Caco-2 (cell line): ENCODE measurements at regions of chr12 and their contacts with region 1.

Region 1: DNA sequence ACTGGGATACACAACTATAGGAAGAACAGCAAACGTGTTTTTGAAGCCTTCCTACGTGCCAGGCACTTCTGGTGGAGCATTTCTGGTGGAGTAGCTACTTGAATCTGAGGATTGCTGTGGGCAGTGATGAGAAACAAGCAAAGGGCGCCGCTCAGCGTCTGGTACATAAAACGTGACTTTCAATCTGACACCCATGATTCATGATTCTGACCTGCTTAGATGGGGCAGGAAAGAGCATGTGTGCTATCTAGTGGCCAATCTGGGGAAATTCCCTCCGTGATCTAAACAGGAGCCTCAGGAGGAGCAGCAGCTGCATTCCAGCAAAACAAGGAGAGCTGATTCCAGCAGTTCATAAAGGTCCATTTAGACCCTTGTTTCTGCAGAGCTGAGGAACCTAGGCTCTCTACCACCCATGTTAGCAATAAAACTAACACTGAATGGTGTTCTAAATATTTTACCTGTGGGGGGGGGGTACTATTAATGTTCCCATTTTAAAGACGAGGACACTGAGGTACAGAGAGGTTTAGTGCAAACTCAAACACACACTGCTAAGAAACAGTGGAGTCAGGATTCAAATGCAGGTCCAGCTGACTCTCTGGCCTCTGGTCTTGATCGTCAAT is 37.8 kb downstream of the PAH start:
- DNase-seq: peak; percentile 51 to 57
- H3K4me3 ChIP-seq: no peak overlapping the region
- H3K4me3 Mint-ChIP-seq: no peak overlapping the region
- H3K27ac Mint-ChIP-seq: no peak overlapping the region
- H3K4me1 ChIP-seq: no peaks in the 10 kb centered on the region
- H3K4me1 Mint-ChIP-seq: no peaks in the 10 kb centered on the region
- H3K27me3 ChIP-seq: no peaks in the 10 kb centered on the region
- H3K27me3 Mint-ChIP-seq: peaks cover 3% of the 10 kb centered on the region
- CTCF ChIP-seq: peak; percentile 40 to 64

Region 2: DNA sequence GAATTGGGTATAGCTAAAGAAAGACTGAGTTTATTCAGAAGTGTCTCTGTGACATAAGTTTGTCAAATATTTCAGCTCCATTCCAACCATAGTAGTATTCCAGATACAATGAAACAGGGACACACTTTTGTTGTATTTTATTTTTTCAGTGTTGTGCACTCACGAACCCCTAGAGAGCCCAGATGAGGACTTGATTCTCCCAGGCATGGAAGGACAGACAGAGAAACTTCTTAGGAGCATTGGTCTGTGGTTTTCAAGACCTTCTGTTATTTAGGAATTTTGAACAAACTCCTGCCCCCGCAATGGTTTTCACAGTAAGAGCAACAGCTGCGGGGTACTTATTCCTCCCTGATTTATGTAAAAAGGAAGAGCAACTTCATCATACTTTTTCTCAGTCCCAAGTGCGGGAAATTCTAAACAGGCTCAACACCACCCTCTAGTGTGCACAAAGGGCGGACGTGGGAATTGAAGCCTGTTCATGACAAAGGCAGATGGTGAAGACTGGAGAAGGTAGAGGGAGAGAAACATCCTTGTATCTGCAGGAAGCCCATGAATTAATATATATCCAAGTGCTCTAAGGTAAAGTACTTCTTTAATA is 109.8 kb before region 1 on chr12:
- CTCF ChIA-PET with region 1: interaction called, 5 read pairs
- POLR2A ChIA-PET with region 1: no interaction called
- intact Hi-C with region 1: loop called (anchors 1 kb)
- DNase-seq: peak; percentile 49 to 64
- H3K4me3 ChIP-seq: no peak overlapping the region
- H3K4me3 Mint-ChIP-seq: no peak overlapping the region
- H3K27ac Mint-ChIP-seq: no peak overlapping the region
- H3K4me1 ChIP-seq: no peaks in the 10 kb centered on the region
- H3K4me1 Mint-ChIP-seq: no peaks in the 10 kb centered on the region
- H3K27me3 ChIP-seq: no peaks in the 10 kb centered on the region
- H3K27me3 Mint-ChIP-seq: peaks cover 7% of the 10 kb centered on the region
- CTCF ChIP-seq: peak; percentile 73 to 77

Region 3: GRCh38 chr12:102816816-102817434 is 62.3 kb before region 1 on chr12:
- CTCF ChIA-PET with region 1: interaction called, 4 read pairs
- POLR2A ChIA-PET with region 1: no interaction called
- intact Hi-C with region 1: loop called (anchors 2 kb)
- DNase-seq: peak in 1 of 2 experiments; percentile 24
- H3K4me3 ChIP-seq: no peak overlapping the region
- H3K4me3 Mint-ChIP-seq: no peak overlapping the region
- H3K27ac Mint-ChIP-seq: no peak overlapping the region
- H3K4me1 ChIP-seq: no peaks in the 10 kb centered on the region
- H3K4me1 Mint-ChIP-seq: no peaks in the 10 kb centered on the region
- H3K27me3 ChIP-seq: no peaks in the 10 kb centered on the region
- H3K27me3 Mint-ChIP-seq: peaks cover 19% of the 10 kb centered on the region
- CTCF ChIP-seq: peak; percentile 70 to 71

Region 4: GRCh38 chr12:102833687-102834445 is 45.4 kb before region 1 on chr12:
- CTCF ChIA-PET with region 1: no interaction called
- POLR2A ChIA-PET with region 1: no interaction called
- intact Hi-C with region 1: no loop called
- DNase-seq: peak; percentile 49 to 58
- H3K4me3 ChIP-seq: no peak overlapping the region
- H3K4me3 Mint-ChIP-seq: no peak overlapping the region
- H3K27ac Mint-ChIP-seq: no peak overlapping the region
- H3K4me1 ChIP-seq: no peaks in the 10 kb centered on the region
- H3K4me1 Mint-ChIP-seq: no peaks in the 10 kb centered on the region
- H3K27me3 ChIP-seq: no peaks in the 10 kb centered on the region
- H3K27me3 Mint-ChIP-seq: no peaks in the 10 kb centered on the region
- CTCF ChIP-seq: no peak

Region 5: GRCh38 chr12:102939670-102940222 is 60.5 kb after region 1 on chr12:
- CTCF ChIA-PET with region 1: interaction called, 18 read pairs
- POLR2A ChIA-PET with region 1: no interaction called
- intact Hi-C with region 1: loop called (anchors 1 kb)
- DNase-seq: no peak
- H3K4me3 ChIP-seq: no peak overlapping the region
- H3K4me3 Mint-ChIP-seq: no peak overlapping the region
- H3K27ac Mint-ChIP-seq: no peak overlapping the region
- H3K4me1 ChIP-seq: no peaks in the 10 kb centered on the region
- H3K4me1 Mint-ChIP-seq: no peaks in the 10 kb centered on the region
- H3K27me3 ChIP-seq: no peaks in the 10 kb centered on the region
- H3K27me3 Mint-ChIP-seq: peaks cover 3% of the 10 kb centered on the region
- CTCF ChIP-seq: peak in 1 of 2 experiments; percentile 47